K562 (cell line): ENCODE measurements at regions of chr19 and their contacts with region 1.

Region 1: GRCh38 chr19:51546650-51547396 is 15.4 kb upstream of the SIGLEC6 start:
- DNase-seq: peak; percentile 73 to 98 (median 78)
- ATAC-seq: peak; percentile 75
- H3K4me3 ChIP-seq: peak overlapping the region; percentile 28
- H3K27ac ChIP-seq: peak overlapping the region; percentile 100
- H3K4me1 ChIP-seq: peaks cover 62 to 66% of the 10 kb centered on the region in 2 experiments
- H3K27me3 ChIP-seq: no peaks in the 10 kb centered on the region; a peak in 1 of 5 replicates
- CTCF ChIP-seq: no peak
- EP300 ChIP-seq: peak; percentile 100
- POLR2A ChIP-seq: peak; percentile 55; the same call in 1 of the 2 replicates
- RAD21 ChIP-seq: peak in 1 of 2 experiments; percentile 52; a peak in 2 of 4 replicates

Region 2: DNA sequence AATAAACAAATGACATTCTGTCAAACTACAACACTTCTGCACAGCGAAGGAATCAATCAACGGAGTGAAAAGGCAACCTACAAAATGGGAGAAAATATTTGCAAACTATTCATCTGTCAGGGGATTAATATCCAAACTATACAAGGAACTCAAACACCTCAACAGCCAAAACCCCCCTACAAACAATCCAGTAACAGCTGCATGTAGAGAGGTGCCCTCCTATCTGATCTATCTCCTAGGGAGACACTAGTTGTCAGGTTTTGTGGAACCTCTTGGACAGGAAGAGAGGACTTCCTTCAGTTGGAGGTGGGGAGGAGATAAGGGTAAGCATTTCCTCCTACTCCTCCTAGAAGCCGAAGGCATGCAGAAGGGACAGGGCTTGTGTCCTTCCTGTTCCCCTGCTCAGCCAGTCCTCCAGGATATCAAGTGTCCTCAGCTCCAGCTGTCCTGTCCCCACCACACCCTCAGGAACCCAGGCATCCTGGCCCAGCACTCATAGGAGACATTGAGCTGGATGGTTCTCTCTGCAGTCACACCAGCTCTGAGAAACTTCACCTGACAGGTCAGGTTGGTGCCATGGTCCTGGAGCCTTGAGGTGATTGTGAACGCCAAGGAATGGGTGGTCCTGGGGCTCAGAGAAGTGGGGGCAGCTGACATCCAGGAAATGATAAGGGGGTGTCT is 78.8 kb before region 1 on chr19:
- CTCF ChIA-PET with region 1: no interaction called
- POLR2A ChIA-PET with region 1: interaction called, 9 read pairs
- in situ Hi-C with region 1: no loop called
- intact Hi-C with region 1: loop called (anchors 2 kb)
- DNase-seq: peak; percentile 67 to 94 (median 79)
- ATAC-seq: peak; percentile 86
- H3K4me3 ChIP-seq: peak overlapping the region; percentile 59
- H3K27ac ChIP-seq: peak overlapping the region; percentile 84
- H3K4me1 ChIP-seq: peaks cover 14 to 24% of the 10 kb centered on the region in 2 experiments
- H3K27me3 ChIP-seq: no peaks in the 10 kb centered on the region
- CTCF ChIP-seq: no peak
- EP300 ChIP-seq: peak; percentile 98
- POLR2A ChIP-seq: peak; percentile 93
- RAD21 ChIP-seq: no peak

Region 3: DNA sequence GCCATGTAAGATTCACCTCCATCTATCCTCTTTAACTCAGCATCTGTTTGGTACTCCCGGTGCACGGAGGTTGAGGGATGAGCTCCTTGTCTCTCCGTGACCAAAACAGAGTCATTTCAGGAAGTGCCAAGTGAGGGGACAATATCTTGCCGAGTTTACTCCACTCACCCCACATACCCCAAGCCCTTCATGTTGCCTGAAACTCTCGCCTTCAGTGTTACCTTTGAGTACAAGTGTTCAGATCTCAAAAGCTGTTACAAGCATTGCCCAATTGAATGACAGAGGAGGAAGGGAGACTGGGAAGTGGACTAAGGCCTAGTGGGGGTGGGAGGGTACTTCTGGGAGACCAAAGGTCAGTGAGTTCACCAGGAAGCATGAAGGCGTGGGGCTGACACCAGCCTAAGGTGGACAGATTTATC is 39.2 kb before region 1 on chr19:
- CTCF ChIA-PET with region 1: no interaction called
- POLR2A ChIA-PET with region 1: interaction called, 8 read pairs
- in situ Hi-C with region 1: no loop called
- intact Hi-C with region 1: loop called (anchors 2 kb)
- DNase-seq: peak; percentile 64 to 91 (median 77)
- ATAC-seq: peak; percentile 86
- H3K4me3 ChIP-seq: peak overlapping the region; percentile 7; the same call in 1 of the 2 replicates
- H3K27ac ChIP-seq: peak overlapping the region; percentile 98
- H3K4me1 ChIP-seq: peaks cover 35 to 58% of the 10 kb centered on the region in 2 experiments
- H3K27me3 ChIP-seq: no peaks in the 10 kb centered on the region
- CTCF ChIP-seq: no peak
- EP300 ChIP-seq: no peak
- POLR2A ChIP-seq: peak; percentile 47; the same call in 1 of the 2 replicates
- RAD21 ChIP-seq: no peak

Region 4: GRCh38 chr19:51531349-51532315 is 15.2 kb before region 1 on chr19 and contains the start of gene SIGLEC6:
- CTCF ChIA-PET with region 1: no interaction called
- POLR2A ChIA-PET with region 1: interaction called, 31 read pairs
- in situ Hi-C with region 1: no loop called
- intact Hi-C with region 1: no loop called
- DNase-seq: peak in 1 of 4 experiments; percentile 78
- ATAC-seq: peak; percentile 86
- H3K4me3 ChIP-seq: no peak within 1 kb of the TSS
- H3K27ac ChIP-seq: 0 out of 3 replicates have a peak within 1 kb of the TSS, but pooled peaks have one; percentile 24
- H3K4me1 ChIP-seq: peaks cover 26 to 27% of the 10 kb centered on the region in 2 experiments
- H3K27me3 ChIP-seq: no peaks in the 10 kb centered on the region
- CTCF ChIP-seq: no peak
- EP300 ChIP-seq: peak; percentile 55; the same call in 1 of the 2 replicates
- POLR2A ChIP-seq: no peak
- RAD21 ChIP-seq: 0 out of 4 replicates have a peak, but pooled peaks of 1 of the 2 experiments have one; percentile 16
- polyA plus RNA-seq, gene SIGLEC6: 0.03 to 0.13 TPM

Region 5: DNA sequence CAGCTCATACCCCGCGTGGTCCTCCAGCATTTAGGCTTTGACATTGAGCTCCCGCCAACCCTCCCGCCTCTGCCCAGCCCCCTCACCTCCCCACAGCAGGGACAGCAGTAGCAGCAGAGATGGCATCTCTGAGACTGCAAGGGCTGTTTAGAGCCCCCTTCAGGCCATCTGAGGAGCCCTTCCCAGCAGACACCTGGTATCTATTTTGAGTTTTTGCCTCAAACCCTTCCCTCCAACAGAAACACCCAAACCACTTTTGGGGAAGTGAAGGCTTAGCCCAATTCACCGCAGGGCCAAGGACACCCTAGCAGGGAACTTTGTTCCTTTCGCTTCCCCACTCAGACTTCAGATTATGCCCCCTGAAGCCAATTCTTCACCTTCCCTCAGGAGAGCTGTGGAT is 18.0 kb after region 1 on chr19:
- CTCF ChIA-PET with region 1: no interaction called
- POLR2A ChIA-PET with region 1: interaction called, 16 read pairs
- in situ Hi-C with region 1: no loop called
- intact Hi-C with region 1: loop called (anchors 2 kb)
- DNase-seq: peak; percentile 27 to 57 (median 47)
- ATAC-seq: peak; percentile 83
- H3K4me3 ChIP-seq: no peak overlapping the region
- H3K27ac ChIP-seq: peak overlapping the region; percentile 19; the same call in 1 of the 3 replicates
- H3K4me1 ChIP-seq: peaks cover 14 to 51% of the 10 kb centered on the region in 2 experiments; a peak in 4 of 5 replicates
- H3K27me3 ChIP-seq: no peaks in the 10 kb centered on the region
- CTCF ChIP-seq: peak; percentile 61 to 63 (median 63)
- EP300 ChIP-seq: no peak; the same call in 1 of the 2 replicates
- POLR2A ChIP-seq: no peak
- RAD21 ChIP-seq: peak; percentile 7 to 49; a peak in 2 of 4 replicates

Region 6: DNA sequence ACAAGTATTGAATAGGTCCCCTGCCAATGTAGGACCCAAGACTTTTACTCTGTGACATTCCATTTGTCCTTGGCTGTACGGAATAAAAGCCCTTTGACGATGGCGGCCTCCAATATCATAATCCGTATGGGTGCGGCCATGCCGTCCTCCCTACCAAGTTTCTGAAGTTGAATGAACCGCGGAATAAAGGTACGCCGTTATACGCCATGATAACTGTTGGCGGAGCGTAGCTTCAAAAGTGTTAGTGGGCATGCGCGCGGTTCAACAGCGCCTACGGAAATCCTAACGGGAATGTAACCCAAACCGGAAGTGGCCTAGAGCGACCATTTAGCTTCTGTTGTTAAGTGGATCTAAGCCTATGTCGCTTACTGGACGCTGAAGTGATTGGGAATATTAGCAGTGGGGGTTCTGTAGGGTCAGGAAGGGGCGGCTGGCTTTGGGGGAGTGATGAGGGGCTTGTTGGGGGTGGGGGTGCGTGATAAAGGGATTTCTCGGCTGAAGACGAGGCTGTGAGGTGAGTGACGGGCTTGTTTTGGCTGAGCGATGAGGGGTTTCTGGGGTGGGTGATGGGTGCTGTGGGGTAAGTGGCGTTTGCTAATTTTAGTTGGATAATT is 24.2 kb after region 1 on chr19 and contains the start of gene ZNF175:
- CTCF ChIA-PET with region 1: no interaction called
- POLR2A ChIA-PET with region 1: interaction called, 16 read pairs
- in situ Hi-C with region 1: no loop called
- intact Hi-C with region 1: loop called (anchors 2 kb)
- DNase-seq: peak; percentile 79 to 98 (median 82)
- ATAC-seq: peak; percentile 91
- H3K4me3 ChIP-seq: peak within 1 kb of the TSS; percentile 71
- H3K27ac ChIP-seq: peak within 1 kb of the TSS; percentile 76
- H3K4me1 ChIP-seq: peaks cover 14 to 54% of the 10 kb centered on the region in 2 experiments
- H3K27me3 ChIP-seq: no peaks in the 10 kb centered on the region
- CTCF ChIP-seq: no peak
- EP300 ChIP-seq: peak; percentile 43; the same call in 1 of the 2 replicates
- POLR2A ChIP-seq: peak; percentile 67
- RAD21 ChIP-seq: no peak
- polyA plus RNA-seq, gene ZNF175: 3.7 to 4.4 TPM

Region 7: DNA sequence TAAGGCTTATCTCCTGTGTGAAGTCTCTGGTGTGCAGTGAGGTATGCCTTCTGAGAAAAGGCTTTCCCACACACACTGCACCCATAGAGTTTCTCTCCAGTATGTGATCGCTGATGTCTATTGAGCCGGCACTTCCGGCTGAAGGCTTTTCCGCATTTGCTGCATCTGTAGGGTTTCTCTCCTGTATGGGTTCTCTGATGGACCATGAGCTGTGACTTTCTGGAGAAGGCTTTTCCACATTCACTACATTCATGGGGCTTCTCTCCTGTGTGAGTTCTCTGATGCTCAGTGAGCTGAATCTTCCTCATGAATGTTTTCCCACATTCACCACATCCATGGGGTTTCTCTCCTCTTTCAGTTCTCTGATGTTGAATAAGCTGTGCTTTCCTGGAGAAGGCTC is 326.3 kb after region 1 on chr19:
- CTCF ChIA-PET with region 1: no interaction called
- POLR2A ChIA-PET with region 1: no interaction called
- in situ Hi-C with region 1: no loop called
- intact Hi-C with region 1: no loop called
- DNase-seq: no peak
- ATAC-seq: no peak
- H3K4me3 ChIP-seq: no peak overlapping the region
- H3K27ac ChIP-seq: no peak overlapping the region
- H3K4me1 ChIP-seq: no peaks in the 10 kb centered on the region
- H3K27me3 ChIP-seq: no peaks in the 10 kb centered on the region
- CTCF ChIP-seq: no peak
- EP300 ChIP-seq: no peak
- POLR2A ChIP-seq: no peak
- RAD21 ChIP-seq: no peak